Activated CD4-positive, alpha-beta T cell treated with anti-CD3 and anti-CD28 coated beads, Interleukin-2, amount 10 ng/mL, durations not matched to agents 24 days and 14 days (primary cell): ENCODE measurements at regions of chr12 and their contacts with region 1.

Region 1: DNA sequence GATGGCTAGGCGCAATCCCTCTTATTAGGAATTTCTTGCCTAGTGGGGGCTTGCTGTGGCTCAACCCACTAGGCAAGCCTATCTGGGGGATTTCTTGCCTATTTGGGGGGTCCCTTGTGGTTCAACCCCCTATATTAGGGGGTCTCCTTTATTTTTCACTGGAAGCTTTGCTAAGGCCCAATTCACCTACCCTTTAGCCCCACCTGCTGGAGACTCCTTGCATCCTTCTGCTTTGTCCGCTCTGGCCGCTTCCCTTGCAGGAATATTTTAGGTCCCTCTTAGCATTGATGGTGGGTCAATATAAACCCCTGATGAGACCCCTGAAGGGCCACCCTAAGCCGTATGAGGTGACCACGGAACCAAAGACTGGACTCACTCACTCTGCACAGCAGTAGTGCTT is 1552.1 kb downstream of the AACS start:
- DNase-seq: no peak
- H3K4me3 Mint-ChIP-seq: no peak overlapping the region
- H3K27ac Mint-ChIP-seq: no peak overlapping the region
- H3K4me1 Mint-ChIP-seq: no peaks in the 10 kb centered on the region
- H3K27me3 Mint-ChIP-seq: no peaks in the 10 kb centered on the region

Region 2: GRCh38 chr12:126069549-126070165 is 547.7 kb before region 1 on chr12:
- intact Hi-C with region 1: loop called (anchors 2 kb)
- DNase-seq: peak; percentile 84
- H3K4me3 Mint-ChIP-seq: no peak overlapping the region
- H3K27ac Mint-ChIP-seq: no peak overlapping the region
- H3K4me1 Mint-ChIP-seq: no peaks in the 10 kb centered on the region
- H3K27me3 Mint-ChIP-seq: no peaks in the 10 kb centered on the region

Region 3: DNA sequence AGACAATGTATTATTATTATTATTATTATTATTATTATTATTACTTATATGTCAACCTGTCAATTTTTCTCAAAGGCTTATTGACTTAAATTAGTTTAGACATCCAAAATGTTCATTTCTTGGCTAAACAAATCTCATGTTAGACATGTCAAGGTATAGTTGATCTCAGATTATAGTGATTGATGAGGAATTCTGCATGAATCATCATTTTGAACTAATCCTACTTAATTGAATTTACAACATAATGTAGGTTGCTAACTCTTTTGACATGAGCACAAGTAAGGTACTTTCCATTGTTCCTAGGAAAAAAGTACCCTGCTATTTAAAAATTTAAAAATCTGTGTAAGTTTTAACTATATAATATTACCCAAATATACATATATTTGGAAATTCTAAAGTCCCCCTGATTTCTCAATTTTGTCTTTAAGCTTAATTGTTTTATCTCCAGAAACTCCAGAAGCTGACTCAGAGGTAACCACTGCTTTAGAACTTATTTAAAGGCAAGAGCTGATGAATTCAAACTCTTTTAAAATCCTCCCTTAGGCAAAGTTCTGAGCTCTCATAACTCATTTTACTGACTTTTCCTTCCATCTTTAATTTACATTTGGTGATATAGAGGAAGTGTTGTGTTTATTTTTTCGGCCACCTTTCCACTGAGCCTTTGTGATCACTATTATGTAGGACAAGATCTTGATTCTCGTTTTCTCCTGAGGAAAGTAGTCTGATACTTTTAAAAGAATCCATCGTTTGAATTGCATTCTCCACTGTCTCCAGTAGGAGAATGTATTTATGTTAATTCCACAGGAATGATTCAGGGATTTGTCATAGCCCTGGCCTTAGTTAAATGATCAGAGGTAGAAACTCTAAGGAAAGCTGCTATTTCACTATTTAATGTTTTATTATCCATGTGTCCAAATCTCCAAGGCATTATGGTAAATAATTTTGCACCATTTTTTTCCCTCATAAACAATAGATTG is 247.5 kb before region 1 on chr12:
- intact Hi-C with region 1: no loop called
- DNase-seq: no peak
- H3K4me3 Mint-ChIP-seq: no peak overlapping the region
- H3K27ac Mint-ChIP-seq: no peak overlapping the region
- H3K4me1 Mint-ChIP-seq: no peaks in the 10 kb centered on the region
- H3K27me3 Mint-ChIP-seq: no peaks in the 10 kb centered on the region